ENCODE measurements at regions of chr15 and their contacts with region 1.

Region 1: DNA sequence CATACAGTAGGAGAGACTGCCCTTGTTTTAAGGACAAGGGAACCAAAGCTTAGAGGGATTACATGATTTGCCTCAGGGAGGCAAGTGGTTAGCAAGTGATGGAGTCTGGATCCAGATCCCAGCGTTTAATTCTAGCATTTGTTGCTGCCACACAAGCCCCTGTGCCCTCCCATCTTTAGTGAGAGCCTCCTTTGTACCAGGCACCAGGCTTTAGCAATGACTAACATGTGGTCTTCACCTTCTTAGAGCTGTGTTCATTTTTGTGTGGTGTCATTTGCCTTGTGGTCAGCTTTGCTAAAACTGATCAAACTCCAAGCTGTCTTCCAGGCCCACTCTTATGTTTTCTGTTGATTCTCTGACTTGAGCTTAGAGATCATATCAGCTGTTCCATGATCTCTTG is 290.5 kb downstream of the RPLP1 start:
- DNase-seq: no peak
- ATAC-seq: no peak
- H3K4me3 ChIP-seq: no peak overlapping the region
- H3K4me3 Mint-ChIP-seq: no peak overlapping the region
- H3K27ac ChIP-seq: no peak overlapping the region
- H3K27ac Mint-ChIP-seq: no peak overlapping the region
- H3K4me1 ChIP-seq: peaks cover 16% of the 10 kb centered on the region
- H3K4me1 Mint-ChIP-seq: peaks cover 17% of the 10 kb centered on the region
- H3K27me3 ChIP-seq: peaks cover 0 to 4% of the 10 kb centered on the region in 2 experiments
- H3K27me3 Mint-ChIP-seq: peaks cover 16% of the 10 kb centered on the region
- CTCF ChIP-seq: no peak

Region 2: GRCh38 chr15:68795298-68795848 is 947.7 kb before region 1 on chr15:
- CTCF ChIA-PET with region 1: no interaction called
- POLR2A ChIA-PET with region 1: no interaction called
- intact Hi-C with region 1: no loop called
- DNase-seq: peak in 8 of 9 experiments; percentile 33 to 77 (median 66)
- ATAC-seq: peak; percentile 59
- H3K4me3 ChIP-seq: peak overlapping the region; percentile 4 to 10
- H3K4me3 Mint-ChIP-seq: peak overlapping the region; percentile 59
- H3K27ac ChIP-seq: peak overlapping the region; percentile 22 to 59
- H3K27ac Mint-ChIP-seq: peak overlapping the region; percentile 88
- H3K4me1 ChIP-seq: peaks cover 83% of the 10 kb centered on the region
- H3K4me1 Mint-ChIP-seq: peaks cover 96% of the 10 kb centered on the region
- H3K27me3 ChIP-seq: no peaks in the 10 kb centered on the region
- H3K27me3 Mint-ChIP-seq: no peaks in the 10 kb centered on the region
- CTCF ChIP-seq: no peak

Region 3: GRCh38 chr15:69755551-69756310 is 12.6 kb after region 1 on chr15:
- CTCF ChIA-PET with region 1: interaction called, 11 read pairs
- POLR2A ChIA-PET with region 1: interaction called, 26 read pairs
- intact Hi-C with region 1: no loop called
- DNase-seq: peak; percentile 16 to 89 (median 77)
- ATAC-seq: peak; percentile 70
- H3K4me3 ChIP-seq: peak overlapping the region; percentile 4 to 5
- H3K4me3 Mint-ChIP-seq: peak overlapping the region; percentile 58
- H3K27ac ChIP-seq: no peak overlapping the region
- H3K27ac Mint-ChIP-seq: peak overlapping the region; percentile 86
- H3K4me1 ChIP-seq: peaks cover 72% of the 10 kb centered on the region
- H3K4me1 Mint-ChIP-seq: peaks cover 75% of the 10 kb centered on the region
- H3K27me3 ChIP-seq: peaks cover 0 to 3% of the 10 kb centered on the region in 2 experiments
- H3K27me3 Mint-ChIP-seq: peaks cover 7% of the 10 kb centered on the region
- CTCF ChIP-seq: no peak

Region 4: GRCh38 chr15:69767191-69767590 is 24.1 kb after region 1 on chr15:
- CTCF ChIA-PET with region 1: no interaction called
- POLR2A ChIA-PET with region 1: no interaction called
- intact Hi-C with region 1: no loop called
- DNase-seq: no peak
- ATAC-seq: no peak
- H3K4me3 ChIP-seq: no peak overlapping the region
- H3K4me3 Mint-ChIP-seq: no peak overlapping the region
- H3K27ac ChIP-seq: no peak overlapping the region
- H3K27ac Mint-ChIP-seq: no peak overlapping the region
- H3K4me1 ChIP-seq: peaks cover 14% of the 10 kb centered on the region
- H3K4me1 Mint-ChIP-seq: peaks cover 22% of the 10 kb centered on the region
- H3K27me3 ChIP-seq: no peaks in the 10 kb centered on the region
- H3K27me3 Mint-ChIP-seq: peaks cover 2% of the 10 kb centered on the region
- CTCF ChIP-seq: no peak

Region 5: GRCh38 chr15:69784798-69785566 is 41.9 kb after region 1 on chr15:
- CTCF ChIA-PET with region 1: no interaction called
- POLR2A ChIA-PET with region 1: no interaction called
- intact Hi-C with region 1: loop called in 1 of 2 experiments (anchors 5 kb)
- DNase-seq: no peak
- ATAC-seq: no peak
- H3K4me3 ChIP-seq: no peak overlapping the region
- H3K4me3 Mint-ChIP-seq: no peak overlapping the region
- H3K27ac ChIP-seq: no peak overlapping the region
- H3K27ac Mint-ChIP-seq: no peak overlapping the region
- H3K4me1 ChIP-seq: peaks cover 23% of the 10 kb centered on the region
- H3K4me1 Mint-ChIP-seq: peaks cover 27% of the 10 kb centered on the region
- H3K27me3 ChIP-seq: no peaks in the 10 kb centered on the region
- H3K27me3 Mint-ChIP-seq: peaks cover 25% of the 10 kb centered on the region
- CTCF ChIP-seq: no peak

Region 6: GRCh38 chr15:69885173-69885955 is 142.3 kb after region 1 on chr15:
- CTCF ChIA-PET with region 1: no interaction called
- POLR2A ChIA-PET with region 1: no interaction called
- intact Hi-C with region 1: no loop called
- DNase-seq: no peak
- ATAC-seq: no peak
- H3K4me3 ChIP-seq: no peak overlapping the region
- H3K4me3 Mint-ChIP-seq: no peak overlapping the region
- H3K27ac ChIP-seq: no peak overlapping the region
- H3K27ac Mint-ChIP-seq: no peak overlapping the region
- H3K4me1 ChIP-seq: no peaks in the 10 kb centered on the region
- H3K4me1 Mint-ChIP-seq: no peaks in the 10 kb centered on the region
- H3K27me3 ChIP-seq: no peaks in the 10 kb centered on the region
- H3K27me3 Mint-ChIP-seq: peaks cover 2% of the 10 kb centered on the region
- CTCF ChIP-seq: no peak

Region 7: DNA sequence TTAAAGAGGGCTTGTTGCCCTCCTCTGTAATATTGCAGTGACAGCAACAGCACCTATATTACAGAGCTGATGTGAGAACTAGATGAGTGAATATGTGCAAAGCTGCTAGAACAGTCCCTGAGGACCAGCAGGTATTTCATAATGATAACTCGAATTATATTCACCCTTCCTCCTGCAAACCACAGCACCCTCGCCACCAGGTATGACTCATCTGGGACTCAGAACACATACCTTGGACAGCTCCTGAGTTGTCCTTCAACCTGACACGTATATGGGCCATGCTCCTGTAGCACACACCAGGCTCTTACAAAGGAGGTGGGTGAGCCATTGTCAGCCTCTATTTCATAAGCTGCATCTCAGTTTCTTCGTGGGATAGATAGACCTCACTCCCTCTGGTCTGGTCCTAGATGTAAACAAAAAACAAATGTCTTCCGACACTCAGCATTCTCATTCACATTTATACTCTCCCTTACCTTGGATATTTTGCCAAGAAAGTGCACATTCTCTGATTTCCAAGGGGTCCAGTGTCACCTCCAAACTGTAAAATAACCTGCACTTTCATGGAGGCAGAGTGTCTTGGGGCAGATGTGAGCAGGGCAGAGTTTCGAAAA is 230.1 kb after region 1 on chr15:
- CTCF ChIA-PET with region 1: no interaction called
- POLR2A ChIA-PET with region 1: no interaction called
- intact Hi-C with region 1: no loop called
- DNase-seq: peak in 3 of 9 experiments; percentile 17 to 34 (median 32)
- ATAC-seq: peak; percentile 40
- H3K4me3 ChIP-seq: no peak overlapping the region
- H3K4me3 Mint-ChIP-seq: no peak overlapping the region
- H3K27ac ChIP-seq: no peak overlapping the region
- H3K27ac Mint-ChIP-seq: no peak overlapping the region
- H3K4me1 ChIP-seq: no peaks in the 10 kb centered on the region
- H3K4me1 Mint-ChIP-seq: no peaks in the 10 kb centered on the region
- H3K27me3 ChIP-seq: no peaks in the 10 kb centered on the region
- H3K27me3 Mint-ChIP-seq: peaks cover 21% of the 10 kb centered on the region
- CTCF ChIP-seq: no peak